A549 (cell line): ENCODE measurements at regions of chr1 and their contacts with region 1.

Region 1: DNA sequence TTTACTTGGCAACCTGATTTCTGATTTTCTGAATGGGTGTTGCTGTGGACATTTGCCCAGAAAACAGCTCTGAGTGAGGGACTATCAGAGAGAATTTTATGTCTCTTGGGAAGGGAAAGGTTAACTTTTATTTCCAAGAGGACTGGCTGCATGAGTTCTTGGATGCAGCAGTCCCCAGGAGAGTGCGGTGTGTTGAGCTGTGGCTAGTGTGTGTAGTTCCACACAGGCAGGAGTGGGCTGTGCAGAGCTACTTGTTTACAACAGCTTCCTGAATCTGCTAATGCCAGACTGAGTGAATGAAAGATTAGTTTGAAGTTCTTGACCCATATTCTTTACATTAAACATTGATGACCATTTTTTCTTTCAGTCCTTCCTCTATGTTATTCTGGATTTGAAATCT is 41.0 kb upstream of the APOBEC4 start:
- DNase-seq: no peak
- ATAC-seq: 0 out of 6 replicates have a peak, but pooled peaks of 1 of the 2 experiments have one; percentile 24
- H3K4me3 ChIP-seq: no peak overlapping the region
- H3K27ac ChIP-seq: no peak overlapping the region; a peak in 1 of 6 replicates
- H3K4me1 ChIP-seq: peaks cover 23% of the 10 kb centered on the region
- CTCF ChIP-seq: no peak
- EP300 ChIP-seq: no peak
- POLR2A ChIP-seq: no peak
- RAD21 ChIP-seq: no peak

Region 2: GRCh38 chr1:183655562-183656075 is 38.4 kb before region 1 on chr1:
- CTCF ChIA-PET with region 1: interaction called, 16 read pairs
- POLR2A ChIA-PET with region 1: no interaction called
- DNase-seq: peak; percentile 74 to 79
- ATAC-seq: peak; percentile 93 to 97
- H3K4me3 ChIP-seq: no peak overlapping the region
- H3K27ac ChIP-seq: peak overlapping the region; percentile 16 to 41; a peak in 2 of 6 replicates
- H3K4me1 ChIP-seq: peaks cover 4% of the 10 kb centered on the region; the same call in 1 of the 3 replicates
- CTCF ChIP-seq: peak; percentile 97
- EP300 ChIP-seq: no peak
- POLR2A ChIP-seq: no peak
- RAD21 ChIP-seq: peak; percentile 92 to 95

Region 3: DNA sequence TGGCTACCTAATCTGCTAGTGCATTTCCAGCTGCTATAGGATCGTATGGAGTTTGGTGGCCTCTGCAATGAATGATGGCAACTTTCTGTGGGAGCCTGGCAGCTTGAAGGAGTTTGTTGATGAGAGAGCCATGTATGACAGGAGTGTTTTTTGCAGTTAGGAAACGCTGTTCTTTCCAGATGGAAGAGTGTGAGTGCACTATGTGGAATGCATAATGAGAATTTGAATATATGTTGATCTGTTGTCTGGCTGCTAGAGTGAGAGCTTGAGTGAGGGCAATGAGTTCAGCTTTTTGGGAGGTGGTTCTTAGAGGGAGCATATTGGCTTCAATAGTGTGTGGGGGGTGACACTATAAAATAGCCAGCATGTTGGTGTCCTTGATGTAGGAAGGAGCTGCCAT is 10.1 kb after region 1 on chr1:
- CTCF ChIA-PET with region 1: no interaction called
- POLR2A ChIA-PET with region 1: no interaction called
- DNase-seq: no peak
- ATAC-seq: no peak
- H3K4me3 ChIP-seq: no peak overlapping the region
- H3K27ac ChIP-seq: no peak overlapping the region
- H3K4me1 ChIP-seq: peaks cover 18% of the 10 kb centered on the region
- CTCF ChIP-seq: no peak
- EP300 ChIP-seq: no peak
- POLR2A ChIP-seq: no peak
- RAD21 ChIP-seq: no peak

Region 4: DNA sequence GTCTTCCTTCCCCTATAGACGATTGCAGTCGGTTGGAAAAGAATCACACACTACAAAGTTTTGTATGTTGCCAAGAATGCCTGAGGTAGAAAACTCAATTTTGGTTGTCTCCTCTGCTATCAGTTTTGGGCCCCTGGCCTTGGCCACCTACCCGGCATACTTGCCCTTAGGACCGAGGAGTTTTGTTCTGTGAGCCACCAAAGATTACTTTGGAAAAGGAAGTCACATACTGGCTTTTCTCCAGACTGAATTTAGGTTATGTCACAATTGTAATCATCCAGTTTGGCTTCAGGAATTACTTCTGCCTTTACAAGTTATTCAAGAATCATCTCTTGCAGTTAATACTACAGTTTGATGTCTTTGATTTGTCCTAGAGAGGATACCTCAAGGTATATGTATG is 182.2 kb after region 1 on chr1:
- CTCF ChIA-PET with region 1: no interaction called
- POLR2A ChIA-PET with region 1: interaction called, 10 read pairs
- DNase-seq: no peak
- ATAC-seq: no peak
- H3K4me3 ChIP-seq: no peak overlapping the region
- H3K27ac ChIP-seq: no peak overlapping the region
- H3K4me1 ChIP-seq: peaks cover 9% of the 10 kb centered on the region
- CTCF ChIP-seq: no peak
- EP300 ChIP-seq: no peak
- POLR2A ChIP-seq: no peak
- RAD21 ChIP-seq: no peak